GM12878 (cell line): ENCODE measurements at regions of chr9 and their contacts with region 1.

Region 1: GRCh38 chr9:78486661-78487060 is 189.7 kb downstream of the PSAT1 start:
- DNase-seq: no peak
- ATAC-seq: no peak
- H3K4me3 ChIP-seq: no peak overlapping the region
- H3K27ac ChIP-seq: no peak overlapping the region
- H3K4me1 ChIP-seq: no peaks in the 10 kb centered on the region
- H3K27me3 ChIP-seq: no peaks in the 10 kb centered on the region
- CTCF ChIP-seq: no peak
- EP300 ChIP-seq: no peak
- POLR2A ChIP-seq: no peak
- RAD21 ChIP-seq: no peak

Region 2: GRCh38 chr9:78428640-78429039 is 58.0 kb before region 1 on chr9:
- CTCF ChIA-PET with region 1: no interaction called
- POLR2A ChIA-PET with region 1: no interaction called
- RAD21 ChIA-PET with region 1: no interaction called
- SMC1A ChIA-PET with region 1: no interaction called
- in situ Hi-C with region 1: no loop called
- intact Hi-C with region 1: loop called (anchors 10 kb)
- DNase-seq: no peak
- ATAC-seq: no peak
- H3K4me3 ChIP-seq: no peak overlapping the region
- H3K27ac ChIP-seq: no peak overlapping the region
- H3K4me1 ChIP-seq: no peaks in the 10 kb centered on the region
- H3K27me3 ChIP-seq: no peaks in the 10 kb centered on the region
- CTCF ChIP-seq: no peak
- EP300 ChIP-seq: no peak
- POLR2A ChIP-seq: no peak
- RAD21 ChIP-seq: no peak

Region 3: GRCh38 chr9:78582821-78583220 is 96.2 kb after region 1 on chr9:
- CTCF ChIA-PET with region 1: no interaction called
- POLR2A ChIA-PET with region 1: no interaction called
- RAD21 ChIA-PET with region 1: no interaction called
- SMC1A ChIA-PET with region 1: no interaction called
- in situ Hi-C with region 1: no loop called
- intact Hi-C with region 1: no loop called
- DNase-seq: no peak
- ATAC-seq: no peak
- H3K4me3 ChIP-seq: no peak overlapping the region
- H3K27ac ChIP-seq: no peak overlapping the region
- H3K4me1 ChIP-seq: no peaks in the 10 kb centered on the region
- H3K27me3 ChIP-seq: peaks cover 0 to 2% of the 10 kb centered on the region in 2 experiments; a peak in 1 of 4 replicates
- CTCF ChIP-seq: no peak
- EP300 ChIP-seq: no peak
- POLR2A ChIP-seq: no peak
- RAD21 ChIP-seq: no peak